ENCODE measurements at regions of chr14 and their contacts with region 1.

Region 1: DNA sequence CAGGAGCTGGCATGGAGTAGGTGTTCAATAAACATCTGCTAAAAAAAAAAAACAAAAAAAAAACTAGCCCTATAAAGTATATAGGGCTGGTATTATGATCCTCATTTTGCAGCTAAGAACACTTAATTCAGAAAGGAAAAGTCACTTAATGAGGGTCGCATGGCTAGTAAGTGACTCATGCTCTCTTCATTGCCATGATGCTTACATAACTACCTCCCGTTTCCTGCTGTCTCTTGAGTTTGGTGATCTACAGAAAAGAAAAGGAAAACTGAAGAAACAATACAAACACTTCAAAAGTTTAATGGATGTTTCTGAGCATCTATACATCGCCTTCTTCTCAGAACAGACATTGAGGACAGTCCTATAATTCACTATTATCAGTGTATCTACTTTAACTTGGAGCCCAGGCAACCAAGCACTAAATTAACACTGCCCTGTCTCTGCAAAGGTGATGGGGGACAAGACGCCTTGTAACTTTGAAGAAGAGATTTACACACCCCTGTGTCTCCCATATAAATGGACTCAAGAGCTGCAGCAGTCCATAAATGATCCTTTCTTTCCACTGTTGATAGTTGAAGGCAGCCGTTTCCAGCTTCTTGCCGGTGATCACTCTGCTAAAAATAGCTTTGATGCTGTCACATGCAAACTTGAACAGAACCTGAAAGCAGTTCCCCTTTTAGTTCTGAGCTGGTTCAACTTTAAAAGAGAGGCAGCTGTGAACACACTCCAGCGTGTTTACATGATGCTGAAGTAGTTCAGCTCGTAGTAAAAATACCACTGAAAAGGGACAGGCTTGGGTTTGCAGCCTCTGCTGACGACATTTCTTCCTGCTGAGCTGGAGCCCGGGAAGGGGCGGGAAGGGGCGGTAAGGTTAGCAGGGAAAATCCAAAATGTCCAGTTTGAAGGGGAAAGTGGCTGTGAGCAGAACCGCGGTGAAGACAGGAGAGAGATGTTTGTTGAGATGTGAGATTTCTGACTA is 113.3 kb downstream of the FOXN3 start:
- DNase-seq: peak; percentile 57
- ATAC-seq: peak; percentile 63
- H3K4me3 Mint-ChIP-seq: peak overlapping the region; percentile 89
- H3K27ac Mint-ChIP-seq: peak overlapping the region; percentile 99
- H3K4me1 Mint-ChIP-seq: peaks cover 77% of the 10 kb centered on the region
- H3K27me3 Mint-ChIP-seq: no peaks in the 10 kb centered on the region
- CTCF ChIP-seq: no peak

Region 2: DNA sequence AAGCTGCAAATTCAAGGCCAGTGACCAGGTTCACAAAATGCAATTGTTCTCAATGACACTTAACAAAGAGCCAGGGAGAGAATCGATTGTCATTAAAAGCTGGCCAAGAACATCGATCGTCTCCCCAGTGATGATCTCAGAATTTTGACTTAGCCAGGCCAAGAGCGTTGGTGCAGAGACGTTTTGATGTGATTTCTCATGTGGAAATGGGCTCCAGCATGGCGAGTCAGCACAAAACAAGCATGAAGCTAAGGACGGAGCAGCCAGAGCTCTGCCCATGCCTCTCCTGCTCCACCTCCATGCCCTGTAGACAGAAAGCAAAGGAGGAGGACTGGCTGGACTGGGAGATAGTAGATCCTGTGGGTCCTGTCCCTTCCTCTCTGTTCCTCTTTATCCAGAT is 157.5 kb before region 1 on chr14:
- CTCF ChIA-PET with region 1: no interaction called
- POLR2A ChIA-PET with region 1: no interaction called
- intact Hi-C with region 1: no loop called
- DNase-seq: no peak
- ATAC-seq: no peak
- H3K4me3 Mint-ChIP-seq: no peak overlapping the region
- H3K27ac Mint-ChIP-seq: no peak overlapping the region
- H3K4me1 Mint-ChIP-seq: no peaks in the 10 kb centered on the region
- H3K27me3 Mint-ChIP-seq: peaks cover 2% of the 10 kb centered on the region
- CTCF ChIP-seq: no peak

Region 3: DNA sequence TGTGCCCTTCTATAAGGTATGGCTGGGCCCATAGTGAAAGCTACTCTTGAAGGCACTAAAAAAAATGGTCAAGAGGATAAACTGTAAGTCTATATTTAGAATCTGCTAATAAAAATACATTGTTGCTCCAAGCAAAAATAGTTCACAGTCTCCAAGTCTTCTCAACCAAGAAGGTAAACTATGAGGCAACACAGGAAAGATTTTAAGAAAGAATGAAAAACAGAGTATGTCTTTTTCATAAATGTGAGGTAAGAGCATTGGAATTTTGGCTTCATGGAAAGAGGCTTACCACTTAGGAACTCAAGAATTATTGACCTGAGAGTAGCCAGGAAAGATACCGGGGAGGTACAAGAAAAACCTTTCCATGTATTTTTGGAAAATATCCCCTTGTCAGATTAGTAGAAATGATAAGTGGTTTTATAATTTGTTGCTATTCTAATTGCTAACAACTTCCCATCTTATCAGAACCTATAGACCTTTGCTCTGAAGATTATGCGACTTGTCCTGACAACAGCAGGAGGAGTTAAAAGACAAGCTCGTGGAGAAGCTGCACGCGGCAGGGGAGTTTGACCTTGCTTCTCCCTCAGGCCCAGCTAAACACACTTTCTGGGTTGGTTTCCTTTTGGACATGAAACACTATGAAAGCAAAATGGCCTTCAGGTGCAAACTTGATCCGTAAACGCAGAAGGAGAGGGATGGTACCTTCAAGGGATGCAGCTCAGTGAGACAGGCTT is 124.8 kb before region 1 on chr14:
- CTCF ChIA-PET with region 1: interaction called, 15 read pairs
- POLR2A ChIA-PET with region 1: interaction called, 12 read pairs
- intact Hi-C with region 1: loop called (anchors 2 kb)
- DNase-seq: no peak
- ATAC-seq: no peak
- H3K4me3 Mint-ChIP-seq: no peak overlapping the region
- H3K27ac Mint-ChIP-seq: peak overlapping the region; percentile 31
- H3K4me1 Mint-ChIP-seq: peaks cover 19% of the 10 kb centered on the region
- H3K27me3 Mint-ChIP-seq: no peaks in the 10 kb centered on the region
- CTCF ChIP-seq: no peak

Region 4: DNA sequence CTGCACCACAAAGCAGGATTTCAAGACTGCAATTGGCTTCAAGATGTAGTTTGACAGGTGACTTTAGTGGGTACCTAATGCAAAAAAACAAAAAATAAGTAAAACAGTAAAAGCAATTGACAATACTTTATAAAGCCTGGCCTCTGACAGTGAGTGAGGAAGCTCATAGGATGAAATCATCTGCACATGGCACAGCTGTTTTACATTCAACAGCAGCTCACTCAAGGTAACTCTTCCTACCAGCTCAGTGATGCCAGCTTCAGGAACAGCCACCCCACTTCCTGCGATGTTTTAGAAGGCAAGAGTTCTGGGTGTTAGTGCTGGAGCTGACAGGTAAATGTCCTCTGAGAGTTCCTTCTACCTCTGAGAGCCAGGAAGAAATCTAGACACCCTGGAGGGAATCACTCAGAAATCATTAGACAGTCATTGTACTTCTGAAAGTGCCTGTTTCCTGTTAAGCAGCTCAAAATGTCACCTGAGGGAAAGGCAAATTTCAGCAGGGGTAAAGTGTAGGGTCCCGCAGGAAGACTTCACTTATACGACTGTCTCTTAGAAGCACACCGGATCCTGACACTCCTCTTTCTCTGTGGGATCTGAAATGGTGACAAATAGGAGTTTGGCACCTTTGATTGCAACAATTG is 13.4 kb after region 1 on chr14:
- CTCF ChIA-PET with region 1: interaction called, 3 read pairs
- POLR2A ChIA-PET with region 1: interaction called, 10 read pairs
- intact Hi-C with region 1: no loop called
- DNase-seq: no peak
- ATAC-seq: peak; percentile 50
- H3K4me3 Mint-ChIP-seq: no peak overlapping the region
- H3K27ac Mint-ChIP-seq: no peak overlapping the region
- H3K4me1 Mint-ChIP-seq: peaks cover 58% of the 10 kb centered on the region
- H3K27me3 Mint-ChIP-seq: no peaks in the 10 kb centered on the region
- CTCF ChIP-seq: no peak

Region 5: GRCh38 chr14:89359477-89360222 is 55.9 kb after region 1 on chr14:
- CTCF ChIA-PET with region 1: no interaction called
- POLR2A ChIA-PET with region 1: interaction called, 28 read pairs
- intact Hi-C with region 1: no loop called
- DNase-seq: no peak
- ATAC-seq: no peak
- H3K4me3 Mint-ChIP-seq: peak overlapping the region; percentile 32
- H3K27ac Mint-ChIP-seq: peak overlapping the region; percentile 72
- H3K4me1 Mint-ChIP-seq: peaks cover 59% of the 10 kb centered on the region
- H3K27me3 Mint-ChIP-seq: no peaks in the 10 kb centered on the region
- CTCF ChIP-seq: no peak

Region 6: DNA sequence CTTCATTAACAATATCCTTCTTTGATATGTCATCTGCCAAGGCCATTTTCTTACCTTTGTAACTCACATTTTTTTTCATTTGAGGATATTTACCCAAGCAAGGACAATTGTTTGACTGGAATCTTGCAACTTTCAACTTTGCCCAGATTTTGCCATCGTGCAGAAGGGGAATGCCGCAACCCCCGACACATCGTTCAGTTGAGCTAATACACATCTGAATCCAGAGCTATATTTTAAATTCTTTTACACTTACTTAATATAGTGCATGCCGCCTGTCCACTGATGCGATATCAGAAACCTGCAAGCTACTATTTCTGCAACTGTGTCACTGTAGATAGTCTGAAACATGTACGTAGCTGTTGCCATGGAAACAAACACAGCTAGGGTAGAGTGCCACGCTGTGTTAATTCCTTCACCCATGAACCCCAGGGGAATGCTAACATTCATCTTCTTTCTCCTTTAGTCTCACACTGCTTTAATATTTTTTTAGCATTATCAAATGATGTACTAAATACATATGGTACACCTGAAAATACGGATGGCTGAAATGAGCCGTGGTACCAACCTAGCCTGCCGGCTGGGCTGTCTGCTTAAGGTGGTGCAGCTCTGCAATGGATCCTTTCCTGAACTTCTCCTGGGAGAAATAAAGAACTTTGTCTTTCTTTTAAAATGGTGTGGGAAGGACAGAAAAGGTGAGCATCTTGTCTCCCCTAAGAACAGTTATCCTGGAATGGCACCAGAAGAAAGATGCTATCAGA is 190.3 kb after region 1 on chr14:
- CTCF ChIA-PET with region 1: no interaction called
- POLR2A ChIA-PET with region 1: no interaction called
- intact Hi-C with region 1: loop called (anchors 2 kb)
- DNase-seq: peak; percentile 23
- ATAC-seq: peak; percentile 99
- H3K4me3 Mint-ChIP-seq: peak overlapping the region; percentile 73
- H3K27ac Mint-ChIP-seq: peak overlapping the region; percentile 88
- H3K4me1 Mint-ChIP-seq: peaks cover 26% of the 10 kb centered on the region
- H3K27me3 Mint-ChIP-seq: no peaks in the 10 kb centered on the region
- CTCF ChIP-seq: no peak

Region 7: GRCh38 chr14:89589400-89590118 is 285.8 kb after region 1 on chr14:
- CTCF ChIA-PET with region 1: no interaction called
- POLR2A ChIA-PET with region 1: no interaction called
- intact Hi-C with region 1: no loop called
- DNase-seq: peak; percentile 24
- ATAC-seq: peak; percentile 84
- H3K4me3 Mint-ChIP-seq: peak overlapping the region; percentile 55
- H3K27ac Mint-ChIP-seq: peak overlapping the region; percentile 85
- H3K4me1 Mint-ChIP-seq: peaks cover 45% of the 10 kb centered on the region
- H3K27me3 Mint-ChIP-seq: no peaks in the 10 kb centered on the region
- CTCF ChIP-seq: no peak

Region 8: GRCh38 chr14:89767861-89768268 is 464.1 kb after region 1 on chr14:
- CTCF ChIA-PET with region 1: interaction called, 3 read pairs
- POLR2A ChIA-PET with region 1: no interaction called
- intact Hi-C with region 1: loop called (anchors 1 kb)
- DNase-seq: peak; percentile 28
- ATAC-seq: peak; percentile 92
- H3K4me3 Mint-ChIP-seq: no peak overlapping the region
- H3K27ac Mint-ChIP-seq: peak overlapping the region; percentile 67
- H3K4me1 Mint-ChIP-seq: peaks cover 31% of the 10 kb centered on the region
- H3K27me3 Mint-ChIP-seq: no peaks in the 10 kb centered on the region
- CTCF ChIP-seq: peak; percentile 20

Measured in activated B cell treated with CpG ODN at 0.5 μM for 24 hours (primary cell).